MCF 10A (cell line): ENCODE measurements at regions of chr2 and their contacts with region 1.

Region 1: DNA sequence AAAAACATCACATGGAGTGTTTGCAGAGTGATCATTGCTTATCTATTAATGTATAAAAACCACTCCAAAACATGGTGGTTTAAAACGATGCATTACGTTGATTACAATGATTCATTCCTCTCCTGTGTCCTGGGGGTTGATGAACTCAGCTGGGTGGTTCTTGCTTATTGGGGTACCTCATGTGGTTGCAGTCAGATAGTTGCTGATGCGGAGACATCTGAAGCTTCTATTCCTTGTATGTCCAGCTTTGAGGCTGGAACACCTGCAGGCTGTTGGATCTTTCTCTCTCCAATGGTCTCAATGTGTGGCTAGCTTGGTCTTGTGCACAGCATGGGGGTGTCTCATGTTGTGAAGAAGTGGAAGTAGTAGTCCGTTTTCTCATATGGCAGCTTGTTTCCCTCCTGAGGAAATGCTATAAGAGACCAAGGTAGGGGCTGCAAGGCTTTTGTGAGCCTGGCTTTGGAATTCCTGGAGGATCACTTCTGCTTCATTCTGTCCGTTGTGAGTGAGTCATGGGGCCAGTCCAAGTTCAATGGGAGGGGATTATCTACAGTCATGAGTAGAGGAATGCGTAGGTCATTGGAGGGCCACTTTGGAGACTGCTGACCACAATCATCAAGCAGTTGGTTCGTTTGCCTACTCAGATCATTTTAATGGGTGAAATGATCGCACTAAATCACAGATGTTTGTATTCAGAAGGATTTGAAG is 601.0 kb downstream of the SLC4A3 start:
- DNase-seq: peak; percentile 84
- H3K4me3 Mint-ChIP-seq: no peak overlapping the region
- H3K27ac Mint-ChIP-seq: no peak overlapping the region
- H3K4me1 Mint-ChIP-seq: peaks cover 33% of the 10 kb centered on the region
- H3K27me3 Mint-ChIP-seq: no peaks in the 10 kb centered on the region
- CTCF ChIP-seq: no peak

Region 2: GRCh38 chr2:219968685-219969345 is 259.6 kb before region 1 on chr2:
- CTCF ChIA-PET with region 1: no interaction called
- POLR2A ChIA-PET with region 1: no interaction called
- intact Hi-C with region 1: loop called (anchors 5 kb)
- DNase-seq: peak; percentile 97
- H3K4me3 Mint-ChIP-seq: peak overlapping the region; percentile 35
- H3K27ac Mint-ChIP-seq: peak overlapping the region; percentile 61
- H3K4me1 Mint-ChIP-seq: peaks cover 17% of the 10 kb centered on the region
- H3K27me3 Mint-ChIP-seq: no peaks in the 10 kb centered on the region
- CTCF ChIP-seq: no peak

Region 3: DNA sequence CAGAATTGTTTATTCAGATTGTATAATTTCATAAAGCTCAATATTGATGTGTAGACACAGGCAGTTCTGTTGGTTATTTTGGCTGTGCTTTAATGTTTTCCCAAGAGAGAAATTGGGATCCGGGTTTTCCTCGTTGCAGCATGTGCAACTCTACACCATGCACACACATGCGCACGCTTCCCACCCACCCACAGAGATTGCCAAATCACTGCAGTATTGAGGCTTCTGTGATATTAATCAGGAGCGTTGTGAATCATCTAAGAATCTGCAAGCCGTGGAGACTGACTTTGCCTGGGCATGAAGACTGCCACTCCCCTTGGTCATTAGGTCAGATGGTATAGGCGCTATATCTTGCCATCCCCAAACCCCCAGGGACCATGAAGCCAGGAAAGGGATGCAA is 29.5 kb before region 1 on chr2:
- CTCF ChIA-PET with region 1: interaction called, 5 read pairs
- POLR2A ChIA-PET with region 1: interaction called, 16 read pairs
- intact Hi-C with region 1: no loop called
- DNase-seq: peak; percentile 97
- H3K4me3 Mint-ChIP-seq: no peak overlapping the region
- H3K27ac Mint-ChIP-seq: peak overlapping the region; percentile 69
- H3K4me1 Mint-ChIP-seq: peaks cover 35% of the 10 kb centered on the region
- H3K27me3 Mint-ChIP-seq: no peaks in the 10 kb centered on the region
- CTCF ChIP-seq: no peak

Region 4: DNA sequence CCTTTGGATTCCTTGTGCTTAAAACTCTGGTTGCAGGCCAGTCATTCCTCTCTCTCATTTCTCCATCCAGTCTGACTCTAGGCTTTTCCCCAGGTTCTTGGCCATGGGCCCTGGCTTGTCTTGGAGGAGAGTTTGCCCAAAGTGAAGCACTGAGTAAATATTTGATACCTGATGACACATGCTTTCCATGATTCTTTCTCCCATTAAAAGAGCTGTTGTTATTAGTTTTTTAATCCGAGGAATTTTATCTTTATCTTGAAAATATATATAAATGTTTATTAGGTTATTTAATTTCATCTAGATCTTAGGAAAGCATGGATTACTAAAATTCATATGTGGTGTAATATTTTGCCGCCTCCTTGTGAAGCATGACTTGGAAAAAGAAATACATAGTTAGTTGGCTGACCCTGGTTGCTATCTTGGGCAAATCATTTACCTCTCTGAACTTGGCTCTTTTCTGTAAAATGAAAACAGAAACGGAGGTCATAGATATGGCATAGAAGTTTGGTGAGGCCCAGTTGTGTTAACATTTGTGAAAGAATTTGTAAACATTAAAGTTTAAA is 49.1 kb after region 1 on chr2:
- CTCF ChIA-PET with region 1: interaction called, 4 read pairs
- POLR2A ChIA-PET with region 1: interaction called, 13 read pairs
- intact Hi-C with region 1: no loop called
- DNase-seq: peak; percentile 85
- H3K4me3 Mint-ChIP-seq: peak overlapping the region; percentile 35
- H3K27ac Mint-ChIP-seq: peak overlapping the region; percentile 89
- H3K4me1 Mint-ChIP-seq: peaks cover 56% of the 10 kb centered on the region
- H3K27me3 Mint-ChIP-seq: no peaks in the 10 kb centered on the region
- CTCF ChIP-seq: no peak

Region 5: DNA sequence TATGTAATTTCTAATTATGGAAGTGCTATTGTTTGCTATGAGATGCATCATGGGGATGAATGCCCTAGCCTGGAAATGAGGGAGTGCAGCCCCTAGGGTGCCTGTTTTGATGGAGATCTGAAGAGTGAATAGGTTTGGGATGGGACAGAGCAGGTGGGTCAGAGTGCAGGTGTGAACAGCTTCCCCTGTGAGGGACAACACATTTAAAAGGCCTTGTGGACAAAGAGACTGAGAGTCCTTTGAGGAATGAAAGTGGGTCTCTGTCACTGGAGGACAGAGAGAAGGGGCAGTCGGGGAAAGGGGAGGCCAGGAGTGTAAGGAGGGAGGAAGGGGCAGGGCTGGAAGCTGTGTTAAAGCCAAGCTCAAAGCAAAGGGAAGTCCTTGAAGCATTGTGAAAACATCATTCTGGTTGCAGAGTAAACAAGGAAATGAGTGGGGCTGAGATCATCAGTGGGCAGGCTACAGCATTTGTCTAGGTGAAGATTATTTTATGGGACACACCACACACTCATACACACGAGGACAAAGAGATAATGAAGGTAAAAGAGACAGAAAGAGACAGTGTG is 276.6 kb after region 1 on chr2:
- CTCF ChIA-PET with region 1: no interaction called
- POLR2A ChIA-PET with region 1: no interaction called
- intact Hi-C with region 1: no loop called
- DNase-seq: peak; percentile 38
- H3K4me3 Mint-ChIP-seq: no peak overlapping the region
- H3K27ac Mint-ChIP-seq: peak overlapping the region; percentile 28
- H3K4me1 Mint-ChIP-seq: peaks cover 19% of the 10 kb centered on the region
- H3K27me3 Mint-ChIP-seq: no peaks in the 10 kb centered on the region
- CTCF ChIP-seq: no peak